Activated CD8-positive, alpha-beta T cell treated with anti-CD3 and anti-CD28 coated beads for 36 hours (primary cell): ENCODE measurements at regions of chr11 and their contacts with region 1.

Region 1: DNA sequence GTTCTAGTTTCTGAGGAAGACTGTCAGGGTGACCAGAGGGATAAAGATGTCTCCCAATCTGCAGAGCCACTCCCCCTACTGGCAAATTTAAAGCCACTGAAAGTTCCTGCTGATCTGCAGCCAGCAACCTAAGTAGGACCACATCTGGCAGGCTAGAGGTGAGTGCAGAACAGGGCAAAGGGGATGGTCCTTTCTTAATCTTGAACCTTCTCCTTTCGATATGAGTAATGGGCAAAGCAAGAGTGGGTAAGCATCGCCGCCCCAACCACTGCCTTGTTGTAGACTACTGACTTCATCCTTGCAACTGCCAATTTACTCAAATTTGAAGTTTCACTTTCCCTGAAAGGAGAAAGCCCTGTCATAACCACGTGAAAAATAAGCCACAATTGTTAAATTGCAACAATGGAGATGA is 30.7 kb downstream of the SCUBE2 start:
- DNase-seq: peak; percentile 87
- ATAC-seq: peak; percentile 99
- H3K4me3 Mint-ChIP-seq: no peak overlapping the region
- H3K27ac Mint-ChIP-seq: peak overlapping the region; percentile 4
- H3K4me1 Mint-ChIP-seq: peaks cover 11% of the 10 kb centered on the region
- H3K27me3 Mint-ChIP-seq: peaks cover 8% of the 10 kb centered on the region
- CTCF ChIP-seq: no peak

Region 2: GRCh38 chr11:8786933-8787332 is 273.8 kb before region 1 on chr11:
- CTCF ChIA-PET with region 1: no interaction called
- POLR2A ChIA-PET with region 1: no interaction called
- intact Hi-C with region 1: no loop called
- DNase-seq: no peak
- ATAC-seq: no peak
- H3K4me3 Mint-ChIP-seq: no peak overlapping the region
- H3K27ac Mint-ChIP-seq: no peak overlapping the region
- H3K4me1 Mint-ChIP-seq: no peaks in the 10 kb centered on the region
- H3K27me3 Mint-ChIP-seq: peaks cover 3% of the 10 kb centered on the region
- CTCF ChIP-seq: no peak

Region 3: DNA sequence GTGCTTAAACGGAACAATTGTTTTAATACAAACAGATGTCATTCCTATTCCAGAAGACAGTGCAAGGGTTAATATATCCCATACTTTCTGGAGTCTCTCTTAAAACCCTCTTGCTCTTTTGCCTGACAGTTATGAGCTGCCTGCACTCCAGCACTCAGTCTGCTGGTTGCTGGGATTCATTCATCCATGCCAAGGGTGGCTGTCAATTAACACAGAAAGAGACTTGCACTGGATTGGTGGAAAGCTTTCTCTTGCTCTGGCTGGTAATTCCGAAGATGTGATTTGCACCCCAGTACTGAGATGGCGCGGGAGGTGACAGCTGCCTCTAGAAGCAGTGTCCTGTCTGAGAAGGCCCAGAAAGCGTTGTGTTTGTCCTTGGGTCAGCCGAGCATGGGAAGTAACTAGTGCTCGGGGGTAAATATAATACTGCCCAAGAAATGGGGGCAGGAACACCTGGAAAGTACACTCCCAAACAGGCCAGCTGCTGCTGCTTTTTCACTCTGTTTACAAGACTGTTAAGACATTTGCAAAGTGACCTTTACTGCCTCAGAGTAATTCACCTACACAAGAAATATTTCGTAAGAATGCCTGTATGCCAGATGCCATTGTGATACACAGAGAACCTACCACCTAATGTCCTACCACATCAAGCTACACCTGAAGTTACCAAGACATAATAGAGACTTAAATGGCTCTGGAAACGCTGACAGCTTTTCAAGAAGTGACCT is 10.2 kb after region 1 on chr11:
- CTCF ChIA-PET with region 1: interaction called, 10 read pairs
- POLR2A ChIA-PET with region 1: no interaction called
- intact Hi-C with region 1: no loop called
- DNase-seq: no peak
- ATAC-seq: no peak
- H3K4me3 Mint-ChIP-seq: no peak overlapping the region
- H3K27ac Mint-ChIP-seq: no peak overlapping the region
- H3K4me1 Mint-ChIP-seq: no peaks in the 10 kb centered on the region
- H3K27me3 Mint-ChIP-seq: peaks cover 11% of the 10 kb centered on the region
- CTCF ChIP-seq: no peak